Natural killer cell (primary cell): ENCODE measurements at regions of chr7 and their contacts with region 1.

Region 1: GRCh38 chr7:141014524-141015395 is at the start of gene MRPS33:
- DNase-seq: peak; percentile 87 to 98
- ATAC-seq: peak; percentile 94 to 99 (median 95)
- H3K4me3 ChIP-seq: peak within 1 kb of the TSS; percentile 68
- H3K4me3 Mint-ChIP-seq: peak within 1 kb of the TSS; percentile 97
- H3K27ac ChIP-seq: peak within 1 kb of the TSS; percentile 96
- H3K27ac Mint-ChIP-seq: peak within 1 kb of the TSS; percentile 99 to 100
- H3K4me1 ChIP-seq: peaks cover 11% of the 10 kb centered on the region
- H3K4me1 Mint-ChIP-seq: peaks cover 42 to 44% of the 10 kb centered on the region in 2 donors
- H3K27me3 ChIP-seq: peaks cover 9% of the 10 kb centered on the region
- H3K27me3 Mint-ChIP-seq: peaks cover 18 to 29% of the 10 kb centered on the region in 2 donors
- CTCF ChIP-seq: peak; percentile 51
- total RNA-seq, gene MRPS33: 12.8 to 14.1 (median 13.7) TPM

Region 2: GRCh38 chr7:140479062-140479738 is 535.6 kb before region 1 on chr7 and contains the start of gene MKRN1:
- intact Hi-C with region 1: loop called (anchors 2 kb)
- DNase-seq: peak; percentile 83 to 95
- ATAC-seq: peak; percentile 84 to 93 (median 91)
- H3K4me3 ChIP-seq: peak within 1 kb of the TSS; percentile 86
- H3K4me3 Mint-ChIP-seq: peak within 1 kb of the TSS; percentile 99
- H3K27ac ChIP-seq: peak within 1 kb of the TSS; percentile 75
- H3K27ac Mint-ChIP-seq: peak within 1 kb of the TSS; percentile 93
- H3K4me1 ChIP-seq: peaks cover 26% of the 10 kb centered on the region
- H3K4me1 Mint-ChIP-seq: peaks cover 30 to 34% of the 10 kb centered on the region in 2 donors
- H3K27me3 ChIP-seq: no peaks in the 10 kb centered on the region
- H3K27me3 Mint-ChIP-seq: no peaks in the 10 kb centered on the region
- CTCF ChIP-seq: no peak
- total RNA-seq, gene MKRN1: 119 to 146 (median 136) TPM

Region 3: DNA sequence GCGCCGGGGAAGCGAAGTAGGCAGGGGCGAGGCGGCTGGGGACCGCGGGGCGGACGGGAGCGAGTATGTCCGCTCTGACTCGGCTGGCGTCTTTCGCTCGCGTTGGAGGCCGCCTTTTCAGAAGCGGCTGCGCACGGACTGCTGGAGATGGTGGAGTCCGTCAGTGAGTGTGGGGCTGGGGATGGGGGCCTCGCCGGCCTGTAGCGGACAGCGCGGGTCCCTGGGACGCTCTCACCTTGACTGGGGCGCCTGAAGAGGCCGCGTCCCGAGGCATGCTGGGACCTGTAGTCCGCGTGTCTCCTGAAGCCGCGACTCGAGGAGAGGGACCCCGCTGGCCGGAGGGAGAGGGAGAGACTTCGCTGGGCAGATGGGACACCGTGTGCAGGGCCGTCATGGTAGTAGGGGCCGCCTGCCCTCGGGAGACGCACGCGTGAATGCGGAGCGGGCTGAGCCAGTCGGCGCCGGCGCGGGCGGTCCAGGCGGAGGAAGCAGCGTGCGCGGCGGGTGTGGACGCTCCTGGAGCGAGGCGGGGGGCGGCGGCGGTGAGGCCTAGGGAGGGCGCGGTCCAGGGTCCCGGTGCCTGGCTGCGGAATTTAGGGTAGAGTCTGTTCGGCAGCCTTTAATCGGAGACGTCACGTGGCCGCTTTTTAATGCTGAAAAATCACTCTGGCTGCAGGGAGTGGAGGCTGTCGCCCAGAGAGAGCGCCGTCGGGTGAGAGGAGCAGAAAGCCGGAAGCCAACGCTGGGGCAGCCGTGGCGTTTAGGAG is 317.9 kb before region 1 on chr7 and contains the start of gene NDUFB2:
- intact Hi-C with region 1: loop called (anchors 10 kb)
- DNase-seq: peak; percentile 83 to 89
- ATAC-seq: peak; percentile 85 to 93 (median 87)
- H3K4me3 ChIP-seq: peak within 1 kb of the TSS; percentile 99
- H3K4me3 Mint-ChIP-seq: peak within 1 kb of the TSS; percentile 99
- H3K27ac ChIP-seq: peak within 1 kb of the TSS; percentile 92
- H3K27ac Mint-ChIP-seq: peak within 1 kb of the TSS; percentile 96 to 98
- H3K4me1 ChIP-seq: peaks cover 23% of the 10 kb centered on the region
- H3K4me1 Mint-ChIP-seq: peaks cover 40% of the 10 kb centered on the region in 2 donors
- H3K27me3 ChIP-seq: no peaks in the 10 kb centered on the region
- H3K27me3 Mint-ChIP-seq: no peaks in the 10 kb centered on the region
- CTCF ChIP-seq: no peak
- total RNA-seq, gene NDUFB2: 152 to 177 (median 177) TPM

Region 4: GRCh38 chr7:140810830-140811556 is 203.8 kb before region 1 on chr7:
- intact Hi-C with region 1: loop called (anchors 1 kb)
- DNase-seq: peak; percentile 35 to 85
- ATAC-seq: peak; percentile 83 to 88 (median 88)
- H3K4me3 ChIP-seq: no peak overlapping the region
- H3K4me3 Mint-ChIP-seq: no peak overlapping the region
- H3K27ac ChIP-seq: no peak overlapping the region
- H3K27ac Mint-ChIP-seq: peak overlapping the region in 1 of 2 donors; percentile 16
- H3K4me1 ChIP-seq: no peaks in the 10 kb centered on the region
- H3K4me1 Mint-ChIP-seq: peaks cover 5 to 6% of the 10 kb centered on the region in 2 donors
- H3K27me3 ChIP-seq: no peaks in the 10 kb centered on the region
- H3K27me3 Mint-ChIP-seq: no peaks in the 10 kb centered on the region
- CTCF ChIP-seq: peak; percentile 76

Region 5: GRCh38 chr7:140983802-140984201 is 31.0 kb before region 1 on chr7:
- intact Hi-C with region 1: loop called (anchors 1 kb)
- DNase-seq: peak in 1 of 2 donors; percentile 33
- ATAC-seq: no peak
- H3K4me3 ChIP-seq: no peak overlapping the region
- H3K4me3 Mint-ChIP-seq: no peak overlapping the region
- H3K27ac ChIP-seq: no peak overlapping the region
- H3K27ac Mint-ChIP-seq: no peak overlapping the region
- H3K4me1 ChIP-seq: peaks cover 4% of the 10 kb centered on the region
- H3K4me1 Mint-ChIP-seq: peaks cover 18 to 24% of the 10 kb centered on the region in 2 donors
- H3K27me3 ChIP-seq: no peaks in the 10 kb centered on the region
- H3K27me3 Mint-ChIP-seq: no peaks in the 10 kb centered on the region
- CTCF ChIP-seq: peak; percentile 38